BJ (cell line): ENCODE measurements at regions of chr9 and their contacts with region 1.

Region 1: GRCh38 chr9:36110434-36110833 is 26.1 kb upstream of the GLIPR2 start:
- DNase-seq: no peak
- H3K4me3 ChIP-seq: no peak overlapping the region
- H3K27me3 ChIP-seq: no peaks in the 10 kb centered on the region
- CTCF ChIP-seq: no peak

Region 2: GRCh38 chr9:36148311-36149051 is 38.0 kb after region 1 on chr9:
- CTCF ChIA-PET with region 1: interaction called, 3 read pairs
- POLR2A ChIA-PET with region 1: interaction called, 11 read pairs
- DNase-seq: peak; percentile 79
- H3K4me3 ChIP-seq: no peak overlapping the region
- H3K27me3 ChIP-seq: no peaks in the 10 kb centered on the region
- CTCF ChIP-seq: no peak